CD8-positive, alpha-beta memory T cell (primary cell): ENCODE measurements at regions of chrX and their contacts with region 1.

Region 1: DNA sequence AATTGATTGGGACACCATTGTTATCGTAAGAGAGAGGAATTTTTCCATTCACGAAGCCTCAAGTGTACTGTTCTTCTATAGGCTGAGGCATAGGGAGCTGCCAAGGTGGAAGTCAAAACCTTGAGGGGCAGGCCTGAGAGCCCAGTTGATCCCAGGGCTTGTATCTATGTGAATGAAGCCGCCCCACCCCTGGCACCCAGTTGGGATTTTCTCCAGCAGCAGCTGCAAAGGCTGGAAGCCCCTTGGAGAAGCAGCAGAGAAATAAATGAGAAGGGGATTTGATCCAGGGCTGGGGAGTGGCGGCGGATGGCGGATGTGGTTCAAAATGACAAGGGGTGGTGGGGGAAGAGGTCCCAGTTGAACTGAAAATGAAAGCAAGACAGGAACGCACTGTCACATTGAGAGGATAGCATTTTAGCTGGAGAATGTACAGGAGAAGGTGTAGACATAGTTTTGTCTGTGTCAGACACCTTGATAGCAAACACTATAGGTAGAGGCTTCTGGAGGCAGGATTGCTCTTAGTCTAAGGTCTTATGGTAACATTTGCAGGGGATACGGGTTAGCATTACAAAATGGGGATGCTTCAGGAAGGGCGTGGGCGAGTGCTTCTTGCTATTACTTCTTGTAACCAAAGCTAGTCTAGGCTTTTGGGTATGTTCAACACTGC is 32.6 kb downstream of the DOCK11 start:
- DNase-seq: peak; percentile 36 to 71 (median 63)
- H3K4me3 ChIP-seq: peak overlapping the region; percentile 78
- H3K4me3 Mint-ChIP-seq: peak overlapping the region; percentile 83 to 95 (median 87)
- H3K27ac ChIP-seq: peak overlapping the region; percentile 82
- H3K27ac Mint-ChIP-seq: peak overlapping the region; percentile 89 to 99 (median 96)
- H3K4me1 ChIP-seq: peaks cover 78% of the 10 kb centered on the region
- H3K4me1 Mint-ChIP-seq: peaks cover 60 to 85% (median 84%) of the 10 kb centered on the region in 3 donors
- H3K27me3 ChIP-seq: no peaks in the 10 kb centered on the region
- H3K27me3 Mint-ChIP-seq: peaks cover 0 to 4% of the 10 kb centered on the region in 2 donors

Region 2: DNA sequence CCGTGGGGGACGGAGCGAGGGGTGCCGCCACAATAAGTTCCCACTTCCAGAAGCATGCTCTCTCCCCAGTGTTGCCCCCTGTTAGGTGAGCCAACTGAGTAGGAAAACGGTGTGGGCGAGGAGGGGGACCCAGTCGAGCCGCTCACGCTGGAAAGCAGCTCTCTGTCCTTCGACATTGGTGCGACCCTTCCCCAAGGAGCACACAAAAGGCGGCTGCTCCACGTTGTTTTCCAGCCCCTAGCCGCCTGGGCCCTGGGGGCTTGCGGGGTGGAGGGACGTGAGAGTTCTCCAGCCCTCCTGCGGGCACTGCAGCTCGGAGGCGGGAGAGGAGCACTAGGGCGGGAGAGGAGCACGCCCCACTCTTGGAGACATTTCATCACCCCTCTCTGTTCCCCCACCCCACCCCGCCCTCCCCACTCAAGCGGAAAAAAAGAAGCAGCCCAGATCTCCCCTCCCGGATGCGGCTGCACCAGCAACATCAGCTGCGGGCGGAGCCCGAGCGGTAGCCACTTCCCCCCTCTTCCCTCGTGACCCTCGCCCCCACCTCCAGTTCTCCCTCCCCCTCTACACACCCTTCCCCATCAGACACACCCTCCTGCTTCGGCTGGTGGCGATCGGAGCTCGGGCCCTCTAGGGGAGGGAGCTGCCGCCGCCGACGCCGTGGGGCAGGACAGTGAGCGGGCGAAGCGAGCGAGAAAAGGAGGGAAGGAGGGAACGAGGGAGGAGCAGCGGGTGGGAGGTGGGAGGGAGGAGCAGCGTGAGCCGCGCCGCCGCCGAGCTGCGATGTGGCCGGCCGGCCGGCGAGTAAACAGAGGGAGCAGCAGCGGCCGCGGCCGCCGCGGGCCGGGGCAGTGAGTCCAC is 32.9 kb before region 1 on chrX and contains the start of gene DOCK11:
- CTCF ChIA-PET with region 1: interaction called, 15 read pairs
- POLR2A ChIA-PET with region 1: interaction called, 33 read pairs
- DNase-seq: peak; percentile 69 to 89 (median 79)
- H3K4me3 ChIP-seq: peak within 1 kb of the TSS; percentile 84
- H3K4me3 Mint-ChIP-seq: peak within 1 kb of the TSS; percentile 96 to 99 (median 99)
- H3K27ac ChIP-seq: peak within 1 kb of the TSS; percentile 90
- H3K27ac Mint-ChIP-seq: peak within 1 kb of the TSS; percentile 95 to 99 (median 98)
- H3K4me1 ChIP-seq: peaks cover 32% of the 10 kb centered on the region
- H3K4me1 Mint-ChIP-seq: peaks cover 21 to 30% (median 29%) of the 10 kb centered on the region in 3 donors
- H3K27me3 ChIP-seq: no peaks in the 10 kb centered on the region
- H3K27me3 Mint-ChIP-seq: no peaks in the 10 kb centered on the region
- total RNA-seq, gene DOCK11: 49.4 to 50.1 TPM

Region 3: GRCh38 chrX:118545510-118545909 is 17.3 kb after region 1 on chrX:
- CTCF ChIA-PET with region 1: no interaction called
- POLR2A ChIA-PET with region 1: no interaction called
- DNase-seq: no peak
- H3K4me3 ChIP-seq: no peak overlapping the region
- H3K4me3 Mint-ChIP-seq: no peak overlapping the region
- H3K27ac ChIP-seq: no peak overlapping the region
- H3K27ac Mint-ChIP-seq: peak overlapping the region in 1 of 8 donors; percentile 40
- H3K4me1 ChIP-seq: no peaks in the 10 kb centered on the region
- H3K4me1 Mint-ChIP-seq: peaks cover 10 to 16% (median 12%) of the 10 kb centered on the region in 3 donors
- H3K27me3 ChIP-seq: no peaks in the 10 kb centered on the region
- H3K27me3 Mint-ChIP-seq: peaks cover 0 to 9% of the 10 kb centered on the region in 2 donors